PC-3 (cell line): ENCODE measurements at regions of chr12 and their contacts with region 1.

Region 1: DNA sequence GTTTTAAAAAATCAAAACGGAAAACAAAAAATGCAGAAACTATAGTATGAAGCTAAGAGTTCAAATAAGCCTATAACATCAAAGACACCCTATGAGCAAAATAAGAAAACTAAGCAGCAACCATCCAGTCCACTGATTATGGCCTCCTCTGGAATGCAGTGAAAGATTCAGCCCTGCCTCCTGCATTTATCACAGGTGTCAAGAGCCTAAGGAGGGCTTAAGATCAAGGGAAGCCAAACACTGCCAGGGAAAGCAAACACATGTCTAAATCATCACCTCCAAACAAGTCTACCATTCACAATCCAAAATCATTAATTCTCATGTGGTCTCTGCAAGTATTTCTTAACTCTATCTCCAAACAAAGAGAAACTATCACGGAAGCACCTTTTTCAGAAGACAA is 28.4 kb downstream of the SARNP start:
- DNase-seq: no peak
- ATAC-seq: no peak
- H3K4me3 ChIP-seq: no peak overlapping the region
- H3K27ac ChIP-seq: no peak overlapping the region
- H3K4me1 ChIP-seq: no peaks in the 10 kb centered on the region
- H3K27me3 ChIP-seq: no peaks in the 10 kb centered on the region
- CTCF ChIP-seq: no peak

Region 2: DNA sequence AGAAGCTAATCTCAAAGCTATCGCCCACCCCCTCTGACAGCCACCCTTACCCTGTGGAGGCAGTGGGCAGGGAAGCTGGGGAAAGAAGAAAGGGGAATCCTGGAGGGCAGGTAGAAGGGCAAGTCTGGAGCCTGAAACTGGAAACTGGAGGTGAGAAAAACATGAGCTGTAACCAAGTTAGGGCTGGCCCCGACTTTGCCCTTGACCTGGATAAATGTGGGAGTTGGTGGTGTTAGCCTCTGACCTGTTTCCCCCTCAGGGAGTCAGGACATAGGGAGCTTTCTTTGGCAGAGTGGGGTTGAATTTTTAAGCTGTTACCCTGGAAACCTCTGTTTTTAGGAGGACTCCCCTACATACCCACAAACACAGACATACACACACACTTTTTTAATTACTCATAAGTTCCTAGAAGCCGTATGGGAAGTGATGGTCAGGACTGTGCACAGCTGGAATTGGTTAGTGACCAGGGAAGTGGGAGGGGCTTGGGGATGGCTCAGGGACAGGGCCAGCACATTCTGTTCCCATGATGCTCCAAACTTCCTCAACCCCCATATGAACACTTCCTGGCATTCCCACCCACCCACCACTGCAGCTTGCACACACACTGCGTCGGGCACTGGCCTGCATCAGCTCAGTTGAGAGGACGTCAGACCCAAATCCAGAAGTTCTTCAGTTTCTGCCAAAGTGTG is 58.6 kb after region 1 on chr12:
- CTCF ChIA-PET with region 1: interaction called, 14 read pairs
- POLR2A ChIA-PET with region 1: no interaction called
- intact Hi-C with region 1: no loop called
- DNase-seq: peak; percentile 23
- ATAC-seq: peak; percentile 38; the same call in 1 of the 2 replicates
- H3K4me3 ChIP-seq: no peak overlapping the region
- H3K27ac ChIP-seq: no peak overlapping the region
- H3K4me1 ChIP-seq: peaks cover 4% of the 10 kb centered on the region
- H3K27me3 ChIP-seq: peaks cover 14% of the 10 kb centered on the region
- CTCF ChIP-seq: no peak